ENCODE measurements at regions of chr3 and their contacts with region 1.

Region 1: DNA sequence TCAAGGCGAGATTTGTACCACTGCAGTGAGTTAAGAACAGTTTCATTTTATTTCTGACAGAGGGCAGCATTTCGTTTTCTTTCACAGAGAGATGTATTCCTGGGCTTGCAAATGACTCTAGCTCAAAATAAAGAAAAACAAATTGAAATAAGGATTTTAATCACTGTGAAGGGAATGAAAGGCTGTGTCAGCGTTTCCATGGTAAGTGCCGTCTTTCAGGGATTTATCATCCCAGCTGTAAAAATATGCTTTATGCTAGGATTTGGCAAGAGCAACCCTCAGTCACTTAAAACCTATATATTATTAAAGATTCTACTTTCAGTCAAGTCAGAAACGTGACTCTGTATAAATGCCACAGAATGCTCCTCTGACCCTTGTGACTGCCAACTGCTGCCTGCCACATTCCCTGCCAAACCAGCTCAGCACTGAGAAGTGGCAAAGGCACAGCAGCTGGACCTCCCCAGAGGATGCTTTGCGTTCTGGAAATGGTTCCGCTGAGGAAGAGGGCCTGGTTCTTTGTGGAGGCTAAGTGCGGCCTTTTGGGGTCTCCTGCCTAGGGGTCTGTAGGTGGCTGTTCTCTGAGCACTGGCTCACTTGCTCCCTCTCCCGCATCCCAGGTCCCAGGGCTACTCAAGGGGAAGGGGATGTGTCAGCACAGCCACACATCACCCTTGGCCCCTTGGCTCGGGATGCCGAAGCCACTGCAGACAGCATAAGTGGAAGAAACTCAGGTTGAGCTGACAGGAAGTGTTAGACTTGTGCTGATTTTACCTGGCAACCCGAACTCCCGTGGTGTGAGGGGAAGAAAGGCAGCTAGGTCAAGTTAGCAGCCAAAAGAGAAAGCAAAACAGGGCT is 56.6 kb upstream of the POMGNT2 start:
- DNase-seq: peak in 8 of 9 donors; percentile 35 to 82 (median 76)
- ATAC-seq: peak; percentile 85
- H3K4me3 ChIP-seq: peak overlapping the region; percentile 19
- H3K4me3 Mint-ChIP-seq: peak overlapping the region; percentile 68 to 91 (median 82)
- H3K27ac ChIP-seq: peak overlapping the region; percentile 74
- H3K27ac Mint-ChIP-seq: peak overlapping the region; percentile 83 to 100 (median 98)
- H3K4me1 ChIP-seq: peaks cover 22 to 26% of the 10 kb centered on the region in 2 donors
- H3K4me1 Mint-ChIP-seq: peaks cover 16 to 37% (median 30%) of the 10 kb centered on the region in 7 donors
- H3K27me3 ChIP-seq: no peaks in the 10 kb centered on the region
- H3K27me3 Mint-ChIP-seq: peaks cover 0 to 2% (median 0%) of the 10 kb centered on the region in 5 donors

Region 2: DNA sequence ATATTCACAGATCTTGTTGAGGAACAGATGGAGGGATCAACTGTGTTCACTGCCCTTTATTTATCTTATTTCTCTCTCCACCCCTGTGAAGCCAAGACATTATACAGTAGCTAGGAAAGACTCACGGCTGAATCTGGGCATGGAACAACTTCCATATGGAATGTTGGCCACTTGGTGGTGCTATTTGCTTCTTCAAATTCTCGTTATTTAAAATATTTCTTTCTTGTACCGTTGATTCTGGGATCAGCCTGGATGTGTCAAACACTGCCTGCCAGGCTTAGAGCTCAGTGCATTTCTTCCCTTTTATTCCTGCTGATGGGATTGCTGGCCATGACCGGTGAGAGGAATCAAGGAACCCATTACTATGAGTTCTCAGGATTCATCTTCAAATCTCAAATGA is 200.8 kb before region 1 on chr3:
- CTCF ChIA-PET with region 1: interaction called, 53 read pairs
- POLR2A ChIA-PET with region 1: interaction called, 4 read pairs
- intact Hi-C with region 1: loop called in 1 of 2 experiments (anchors 1 kb)
- DNase-seq: peak in 6 of 9 donors; percentile 11 to 50 (median 42)
- ATAC-seq: peak; percentile 45
- H3K4me3 ChIP-seq: no peak overlapping the region
- H3K4me3 Mint-ChIP-seq: no peak overlapping the region
- H3K27ac ChIP-seq: no peak overlapping the region
- H3K27ac Mint-ChIP-seq: peak overlapping the region in 2 of 9 donors; percentile 2 to 24
- H3K4me1 ChIP-seq: peaks cover 0 to 27% of the 10 kb centered on the region in 2 donors
- H3K4me1 Mint-ChIP-seq: peaks cover 0 to 38% (median 34%) of the 10 kb centered on the region in 7 donors
- H3K27me3 ChIP-seq: no peaks in the 10 kb centered on the region
- H3K27me3 Mint-ChIP-seq: peaks cover 0 to 19% (median 3%) of the 10 kb centered on the region in 5 donors

Region 3: GRCh38 chr3:43190666-43191065 is 28.2 kb after region 1 on chr3:
- CTCF ChIA-PET with region 1: interaction called, 15 read pairs
- POLR2A ChIA-PET with region 1: interaction called, 36 read pairs
- intact Hi-C with region 1: loop called (anchors 1 kb)
- DNase-seq: no peak
- ATAC-seq: no peak
- H3K4me3 ChIP-seq: no peak overlapping the region
- H3K4me3 Mint-ChIP-seq: no peak overlapping the region
- H3K27ac ChIP-seq: no peak overlapping the region
- H3K27ac Mint-ChIP-seq: peak overlapping the region in 4 of 9 donors; percentile 1 to 66 (median 34)
- H3K4me1 ChIP-seq: peaks cover 32 to 46% of the 10 kb centered on the region in 2 donors
- H3K4me1 Mint-ChIP-seq: peaks cover 25 to 70% (median 58%) of the 10 kb centered on the region in 7 donors
- H3K27me3 ChIP-seq: no peaks in the 10 kb centered on the region
- H3K27me3 Mint-ChIP-seq: peaks cover 0 to 30% (median 0%) of the 10 kb centered on the region in 5 donors

Region 4: GRCh38 chr3:43223670-43224364 is 61.4 kb after region 1 on chr3:
- CTCF ChIA-PET with region 1: interaction called, 50 read pairs
- POLR2A ChIA-PET with region 1: interaction called, 37 read pairs
- intact Hi-C with region 1: loop called (anchors 1 to 2 kb)
- DNase-seq: peak in 4 of 9 donors; percentile 18 to 46 (median 38)
- ATAC-seq: peak; percentile 57
- H3K4me3 ChIP-seq: no peak overlapping the region
- H3K4me3 Mint-ChIP-seq: peak overlapping the region in 6 of 10 donors; percentile 20 to 77 (median 47)
- H3K27ac ChIP-seq: no peak overlapping the region
- H3K27ac Mint-ChIP-seq: peak overlapping the region in 7 of 9 donors; percentile 18 to 93 (median 87)
- H3K4me1 ChIP-seq: peaks cover 13 to 56% of the 10 kb centered on the region in 2 donors
- H3K4me1 Mint-ChIP-seq: peaks cover 25 to 67% (median 63%) of the 10 kb centered on the region in 7 donors
- H3K27me3 ChIP-seq: no peaks in the 10 kb centered on the region
- H3K27me3 Mint-ChIP-seq: no peaks in the 10 kb centered on the region

Region 5: DNA sequence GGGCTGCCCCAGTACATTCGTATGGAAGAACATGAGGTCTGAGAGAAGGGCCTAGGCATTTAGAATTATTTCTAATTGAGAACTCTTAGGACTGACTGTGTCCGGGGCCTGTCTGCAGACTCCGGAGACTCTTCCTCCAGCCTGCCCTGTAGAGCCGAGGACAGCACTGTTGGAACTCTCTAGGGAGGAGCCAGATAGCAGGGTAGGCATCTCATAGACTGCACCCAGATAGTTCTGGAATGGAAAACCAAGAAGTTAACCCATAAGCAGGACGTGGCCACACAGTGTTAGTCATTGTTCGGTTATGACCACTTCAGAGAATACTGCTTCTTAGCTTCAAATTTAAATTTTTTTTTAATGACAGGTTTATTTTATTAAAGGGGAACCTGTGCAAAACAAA is 183.4 kb after region 1 on chr3:
- CTCF ChIA-PET with region 1: interaction called, 12 read pairs
- POLR2A ChIA-PET with region 1: interaction called, 7 read pairs
- intact Hi-C with region 1: loop called in 1 of 2 experiments (anchors 2 kb)
- DNase-seq: no peak
- ATAC-seq: no peak
- H3K4me3 ChIP-seq: no peak overlapping the region
- H3K4me3 Mint-ChIP-seq: peak overlapping the region in 9 of 10 donors; percentile 18 to 73 (median 64)
- H3K27ac ChIP-seq: peak overlapping the region; percentile 48
- H3K27ac Mint-ChIP-seq: peak overlapping the region; percentile 88 to 96 (median 92)
- H3K4me1 ChIP-seq: peaks cover 68 to 83% of the 10 kb centered on the region in 2 donors
- H3K4me1 Mint-ChIP-seq: peaks cover 41 to 85% (median 74%) of the 10 kb centered on the region in 7 donors
- H3K27me3 ChIP-seq: no peaks in the 10 kb centered on the region
- H3K27me3 Mint-ChIP-seq: no peaks in the 10 kb centered on the region

Region 6: DNA sequence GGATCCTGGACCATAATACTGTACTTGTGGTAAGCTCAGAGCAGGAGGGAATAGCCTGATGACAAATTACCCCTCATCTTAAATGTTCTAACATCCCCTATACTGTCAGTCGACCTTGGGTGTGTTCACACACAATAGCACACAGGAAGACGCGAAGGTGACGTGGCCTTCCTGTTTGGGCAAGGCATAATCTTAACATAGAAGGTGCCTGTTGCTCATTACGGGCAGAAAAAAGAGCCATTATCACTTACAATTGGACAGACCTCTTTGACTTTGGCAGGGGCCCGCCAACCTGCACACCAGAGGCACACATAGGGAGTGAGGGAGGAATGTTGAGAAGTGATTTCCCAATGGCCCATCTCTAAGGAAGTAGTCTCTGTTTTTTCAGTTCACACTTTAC is 315.1 kb after region 1 on chr3:
- CTCF ChIA-PET with region 1: no interaction called
- POLR2A ChIA-PET with region 1: no interaction called
- intact Hi-C with region 1: loop called in 1 of 2 experiments (anchors 1 kb)
- DNase-seq: peak in 8 of 9 donors; percentile 21 to 81 (median 72)
- ATAC-seq: peak; percentile 98
- H3K4me3 ChIP-seq: peak overlapping the region; percentile 7
- H3K4me3 Mint-ChIP-seq: peak overlapping the region; percentile 48 to 78 (median 65)
- H3K27ac ChIP-seq: peak overlapping the region; percentile 71
- H3K27ac Mint-ChIP-seq: peak overlapping the region; percentile 91 to 99 (median 98)
- H3K4me1 ChIP-seq: peaks cover 33 to 40% of the 10 kb centered on the region in 2 donors
- H3K4me1 Mint-ChIP-seq: peaks cover 24 to 66% (median 60%) of the 10 kb centered on the region in 7 donors
- H3K27me3 ChIP-seq: no peaks in the 10 kb centered on the region
- H3K27me3 Mint-ChIP-seq: peaks cover 0 to 2% (median 0%) of the 10 kb centered on the region in 5 donors

Region 7: DNA sequence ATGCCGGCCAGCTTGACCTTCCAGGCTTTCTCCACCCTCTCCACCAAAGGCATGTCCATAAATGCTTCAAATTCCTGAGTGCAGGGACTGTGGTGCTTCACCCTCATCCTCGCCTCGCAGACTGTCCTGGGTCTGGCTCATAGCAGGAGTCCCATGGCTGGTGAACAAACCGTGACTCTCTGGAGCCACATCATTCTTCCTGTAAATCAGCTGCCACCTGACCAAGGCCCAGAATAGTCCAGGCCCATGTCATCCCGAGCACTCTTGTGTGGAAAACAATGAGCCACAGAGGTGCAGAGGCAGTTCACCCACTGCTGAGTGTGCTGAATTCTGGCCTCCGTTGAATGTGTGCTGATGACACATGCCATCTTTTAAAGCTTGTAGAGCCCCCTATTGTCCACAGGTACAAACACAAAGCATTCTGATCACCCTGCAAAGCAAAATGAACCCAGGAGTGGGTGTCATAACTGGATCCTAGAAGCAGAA is 596.9 kb after region 1 on chr3:
- CTCF ChIA-PET with region 1: no interaction called
- POLR2A ChIA-PET with region 1: no interaction called
- intact Hi-C with region 1: loop called in 1 of 2 experiments (anchors 5 kb)
- DNase-seq: peak in 5 of 9 donors; percentile 2 to 30 (median 26)
- ATAC-seq: peak; percentile 34
- H3K4me3 ChIP-seq: no peak overlapping the region
- H3K4me3 Mint-ChIP-seq: peak overlapping the region in 1 of 10 donors; percentile 12
- H3K27ac ChIP-seq: no peak overlapping the region
- H3K27ac Mint-ChIP-seq: peak overlapping the region in 5 of 9 donors; percentile 56 to 97 (median 84)
- H3K4me1 ChIP-seq: peaks cover 8 to 41% of the 10 kb centered on the region in 2 donors
- H3K4me1 Mint-ChIP-seq: peaks cover 19 to 54% (median 51%) of the 10 kb centered on the region in 7 donors
- H3K27me3 ChIP-seq: no peaks in the 10 kb centered on the region
- H3K27me3 Mint-ChIP-seq: peaks cover 0 to 9% (median 0%) of the 10 kb centered on the region in 5 donors

Measured in naive thymus-derived CD4-positive, alpha-beta T cell (primary cell).